Dendritic cell treated with granulocyte-macrophage colony-stimulating factor and Interleukin-4, amounts not matched to agents 40 ng/mL and 50 ng/mL, for 4 days (primary cell): ENCODE measurements at regions of chr22 and their contacts with region 1.

Region 1: DNA sequence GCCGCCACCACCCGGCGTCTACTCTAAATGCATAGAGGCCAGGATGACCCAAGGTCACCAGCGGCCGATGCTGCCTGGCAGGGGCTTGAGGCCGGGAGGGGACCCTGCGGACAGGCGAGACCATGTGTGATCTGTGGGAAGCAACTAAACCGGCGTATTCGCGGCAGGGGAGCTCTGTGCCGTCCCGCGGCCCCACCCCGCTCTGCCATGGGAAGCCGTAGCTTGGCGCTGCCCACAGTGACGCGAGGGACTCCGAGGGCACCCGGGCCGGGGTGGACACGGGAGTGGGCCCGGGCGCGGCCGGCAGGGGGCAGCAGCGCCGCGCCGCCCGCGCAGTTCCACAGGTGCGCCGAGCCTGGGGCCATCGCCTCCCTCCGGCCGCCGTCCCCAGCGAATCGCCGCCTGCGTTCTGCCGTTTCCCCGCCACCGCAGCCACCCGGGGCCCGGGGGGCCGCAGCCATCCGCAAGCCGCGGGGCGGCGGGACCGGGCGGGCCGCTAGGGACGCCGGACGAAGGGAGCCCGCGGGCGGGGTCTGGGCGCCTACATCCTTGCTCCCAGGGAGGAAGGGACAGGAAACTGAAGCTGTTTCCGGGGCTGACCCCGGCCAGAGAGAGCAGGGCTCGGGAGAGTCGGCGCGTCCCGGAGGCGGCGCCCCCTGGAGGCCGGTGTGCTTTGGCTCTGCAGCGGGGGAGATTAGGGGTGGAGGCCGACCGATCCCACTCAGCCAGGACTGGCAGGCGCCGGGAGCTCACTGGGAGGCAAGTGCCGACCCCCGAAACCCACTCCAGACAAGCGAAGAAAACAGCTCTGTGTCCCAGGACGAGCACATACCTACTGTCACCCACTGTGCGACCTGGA is 12.5 kb upstream of the HDHD5 start:
- H3K4me3 Mint-ChIP-seq: peak overlapping the region; percentile 88
- H3K27ac Mint-ChIP-seq: peak overlapping the region; percentile 94
- H3K4me1 Mint-ChIP-seq: peaks cover 11% of the 10 kb centered on the region
- H3K27me3 Mint-ChIP-seq: no peaks in the 10 kb centered on the region

Region 2: GRCh38 chr22:17057959-17058814 is 113.4 kb before region 1 on chr22:
- intact Hi-C with region 1: no loop called
- H3K4me3 Mint-ChIP-seq: no peak overlapping the region
- H3K27ac Mint-ChIP-seq: no peak overlapping the region
- H3K4me1 Mint-ChIP-seq: peaks cover 5% of the 10 kb centered on the region
- H3K27me3 Mint-ChIP-seq: no peaks in the 10 kb centered on the region

Region 3: GRCh38 chr22:17074648-17075002 is 96.9 kb before region 1 on chr22:
- intact Hi-C with region 1: loop called (anchors 1 kb)
- H3K4me3 Mint-ChIP-seq: no peak overlapping the region
- H3K27ac Mint-ChIP-seq: no peak overlapping the region
- H3K4me1 Mint-ChIP-seq: peaks cover 18% of the 10 kb centered on the region
- H3K27me3 Mint-ChIP-seq: peaks cover 2% of the 10 kb centered on the region

Region 4: DNA sequence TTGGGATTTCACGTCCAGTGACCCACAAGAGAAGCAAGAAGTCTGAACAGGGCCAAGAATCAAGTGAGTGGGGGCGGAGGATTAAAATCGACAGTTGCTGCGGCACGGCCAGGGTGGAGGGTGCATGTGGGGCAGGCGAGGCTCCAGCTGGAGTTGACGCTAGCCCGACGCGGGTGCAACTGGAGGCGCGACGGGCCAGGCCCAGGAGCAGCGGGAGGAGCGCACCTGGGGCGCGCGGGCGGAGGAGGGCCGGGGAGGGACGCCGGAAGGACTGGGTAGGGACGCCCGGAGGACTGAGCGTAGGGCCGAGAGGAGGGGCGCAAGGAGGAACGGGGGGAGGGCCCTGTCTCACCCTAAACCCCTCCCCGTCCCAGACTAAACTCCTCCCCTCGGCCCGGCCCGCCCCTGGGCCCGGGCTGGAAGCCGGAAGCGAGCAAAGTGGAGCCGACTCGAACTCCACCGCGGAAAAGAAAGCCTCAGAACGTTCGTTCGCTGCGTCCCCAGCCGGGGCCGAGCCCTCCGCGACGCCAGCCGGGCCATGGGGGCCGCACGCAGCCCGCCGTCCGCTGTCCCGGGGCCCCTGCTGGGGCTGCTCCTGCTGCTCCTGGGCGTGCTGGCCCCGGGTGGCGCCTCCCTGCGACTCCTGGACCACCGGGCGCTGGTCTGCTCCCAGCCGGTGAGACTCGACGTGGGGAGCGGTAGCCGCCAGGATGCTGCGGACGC is 86.8 kb before region 1 on chr22 and contains the start of gene IL17RA:
- intact Hi-C with region 1: loop called (anchors 2 kb)
- H3K4me3 Mint-ChIP-seq: peak within 1 kb of the TSS; percentile 96
- H3K27ac Mint-ChIP-seq: peak within 1 kb of the TSS; percentile 97
- H3K4me1 Mint-ChIP-seq: peaks cover 46% of the 10 kb centered on the region
- H3K27me3 Mint-ChIP-seq: no peaks in the 10 kb centered on the region

Region 5: GRCh38 chr22:17121227-17122195 is 50.0 kb before region 1 on chr22 and contains the start of gene TMEM121B:
- intact Hi-C with region 1: loop called (anchors 5 kb)
- H3K4me3 Mint-ChIP-seq: peak within 1 kb of the TSS; percentile 82
- H3K27ac Mint-ChIP-seq: no peak within 1 kb of the TSS
- H3K4me1 Mint-ChIP-seq: peaks cover 49% of the 10 kb centered on the region
- H3K27me3 Mint-ChIP-seq: peaks cover 17% of the 10 kb centered on the region

Region 6: GRCh38 chr22:17158568-17159503 is 12.7 kb before region 1 on chr22 and contains the start of gene HDHD5:
- intact Hi-C with region 1: loop called (anchors 1 kb)
- H3K4me3 Mint-ChIP-seq: peak within 1 kb of the TSS; percentile 88
- H3K27ac Mint-ChIP-seq: peak within 1 kb of the TSS; percentile 88
- H3K4me1 Mint-ChIP-seq: peaks cover 45% of the 10 kb centered on the region
- H3K27me3 Mint-ChIP-seq: no peaks in the 10 kb centered on the region

Region 7: GRCh38 chr22:17501679-17502285 is 330.2 kb after region 1 on chr22:
- intact Hi-C with region 1: loop called (anchors 1 kb)
- H3K4me3 Mint-ChIP-seq: no peak overlapping the region
- H3K27ac Mint-ChIP-seq: no peak overlapping the region
- H3K4me1 Mint-ChIP-seq: peaks cover 24% of the 10 kb centered on the region
- H3K27me3 Mint-ChIP-seq: no peaks in the 10 kb centered on the region